MCF 10A (cell line): ENCODE measurements at regions of chr18 and their contacts with region 1.

Region 1: DNA sequence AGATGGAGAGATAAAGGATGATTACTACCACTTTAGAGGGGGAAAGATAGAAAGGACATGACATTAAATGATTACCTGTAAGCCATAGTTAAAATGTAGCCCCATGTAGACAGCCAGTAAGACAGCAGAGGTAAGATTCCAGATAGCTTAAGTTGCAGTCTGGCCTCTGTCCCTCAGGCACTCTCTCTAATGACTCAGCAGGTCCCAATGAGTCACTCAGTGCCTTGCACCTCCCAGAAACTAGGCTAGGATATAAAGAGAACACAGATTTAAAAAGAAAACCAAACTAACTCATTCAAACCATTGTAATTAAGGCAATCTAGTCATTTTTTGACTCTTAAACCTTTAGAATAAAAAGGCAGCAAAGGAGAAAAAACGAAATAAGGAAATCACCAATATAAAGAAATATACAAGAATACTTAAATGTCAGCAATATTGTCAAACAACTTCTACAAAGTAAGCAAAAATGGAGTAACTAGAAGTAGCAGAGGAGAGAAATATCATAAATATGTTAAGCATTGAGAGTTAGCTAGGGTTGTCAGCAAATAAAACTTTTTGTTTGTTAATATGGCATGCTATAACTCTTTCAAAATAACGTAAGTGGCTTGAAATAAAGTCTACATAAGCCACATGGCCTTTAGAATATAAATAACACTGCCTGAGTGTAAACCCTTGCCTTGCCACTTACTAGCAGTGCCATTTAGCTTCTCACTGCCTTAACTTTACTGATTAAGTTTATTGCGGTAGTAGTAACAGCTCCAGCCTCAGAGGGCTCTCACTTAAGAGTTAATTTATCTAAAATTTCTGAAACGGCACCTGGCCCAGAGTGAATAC is 48.5 kb downstream of the SOCS6 start:
- DNase-seq: peak; percentile 95
- H3K4me3 Mint-ChIP-seq: peak overlapping the region; percentile 1
- H3K27ac Mint-ChIP-seq: peak overlapping the region; percentile 90
- H3K4me1 Mint-ChIP-seq: peaks cover 26% of the 10 kb centered on the region
- H3K27me3 Mint-ChIP-seq: no peaks in the 10 kb centered on the region
- CTCF ChIP-seq: no peak

Region 2: DNA sequence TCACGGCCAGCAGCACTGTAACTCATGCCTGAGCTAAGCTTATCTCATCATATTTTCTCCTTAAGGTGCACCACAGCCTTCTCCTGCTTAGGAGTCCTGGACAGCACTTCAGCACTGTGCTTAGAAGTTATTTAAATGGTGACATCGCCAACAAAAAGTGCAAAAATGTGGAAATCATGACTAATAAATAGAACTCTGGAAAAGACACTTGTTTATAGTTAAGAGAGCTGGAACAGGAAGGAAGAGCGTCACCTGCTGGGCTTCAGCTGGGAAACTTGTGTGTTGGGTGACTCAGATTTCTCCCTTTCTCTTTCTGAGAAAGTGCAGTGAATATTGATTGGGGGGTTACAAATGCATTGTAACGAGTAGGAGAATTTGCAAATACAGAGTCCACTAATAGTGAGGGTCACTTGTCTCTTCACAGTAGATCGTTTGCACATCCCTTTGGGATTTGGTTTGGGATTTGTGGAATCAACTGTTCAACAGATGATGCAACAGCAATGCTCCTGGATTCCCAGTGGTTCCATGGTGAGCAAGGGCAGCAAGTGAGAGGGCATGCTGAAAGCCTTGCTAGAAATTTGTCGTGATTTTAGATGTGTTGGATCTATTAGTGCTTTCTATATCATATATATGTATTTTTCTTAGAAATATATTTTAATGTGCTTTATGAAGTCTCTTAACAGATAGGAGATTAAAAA is 852.5 kb before region 1 on chr18:
- CTCF ChIA-PET with region 1: no interaction called
- POLR2A ChIA-PET with region 1: no interaction called
- intact Hi-C with region 1: no loop called
- DNase-seq: peak; percentile 16
- H3K4me3 Mint-ChIP-seq: no peak overlapping the region
- H3K27ac Mint-ChIP-seq: no peak overlapping the region
- H3K4me1 Mint-ChIP-seq: no peaks in the 10 kb centered on the region
- H3K27me3 Mint-ChIP-seq: peaks cover 41% of the 10 kb centered on the region
- CTCF ChIP-seq: no peak

Region 3: DNA sequence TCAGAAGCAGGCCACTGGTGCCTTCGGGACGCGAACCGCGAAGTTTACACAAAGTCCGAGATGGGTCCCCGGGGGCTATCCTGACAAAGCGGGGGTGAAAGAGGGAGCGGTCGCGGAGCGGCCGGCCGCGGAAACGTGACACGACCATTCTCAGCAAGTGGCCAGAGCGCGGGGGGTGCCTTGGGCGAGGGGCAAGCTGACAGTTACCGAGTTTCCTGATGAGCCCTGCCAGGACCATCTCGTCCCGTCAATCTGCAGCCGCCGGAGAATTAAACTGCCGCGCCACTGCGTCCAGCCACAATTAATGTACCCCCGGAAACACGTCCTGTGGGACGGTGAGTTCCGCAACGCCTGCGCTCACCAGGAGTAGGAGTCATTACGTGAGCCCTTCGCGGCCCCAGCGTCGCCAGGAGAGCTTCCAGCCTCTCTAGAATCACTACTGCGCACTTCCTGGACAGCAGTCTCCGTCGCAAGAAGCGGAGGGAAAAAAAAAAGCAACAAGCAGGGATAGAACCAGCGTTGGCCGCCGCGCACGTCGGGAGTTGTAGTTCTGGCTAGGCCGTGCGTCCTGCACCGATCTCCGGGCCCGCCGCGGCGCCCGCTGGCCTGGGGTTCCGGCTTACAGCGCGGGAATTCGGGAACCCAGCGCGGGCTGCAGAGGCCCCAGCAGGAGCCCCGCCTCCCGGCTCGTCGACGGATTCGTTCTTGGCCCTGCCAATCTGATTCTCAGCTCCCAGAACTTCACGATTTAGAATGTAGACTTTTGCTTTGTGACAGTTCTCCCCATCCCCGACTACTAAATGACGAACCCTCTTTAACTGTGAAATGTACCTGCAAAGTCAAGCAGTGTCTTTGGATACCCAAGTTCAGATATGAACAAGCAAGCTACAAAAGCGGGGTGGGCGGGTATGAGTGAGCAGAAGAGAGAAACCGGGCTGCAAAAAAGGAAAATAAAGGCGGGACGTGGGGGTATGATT is 131.6 kb before region 1 on chr18 and contains the start of gene RTTN:
- CTCF ChIA-PET with region 1: no interaction called
- POLR2A ChIA-PET with region 1: interaction called, 4 read pairs
- intact Hi-C with region 1: loop called (anchors 1 kb)
- DNase-seq: peak; percentile 92
- H3K4me3 Mint-ChIP-seq: peak within 1 kb of the TSS; percentile 90
- H3K27ac Mint-ChIP-seq: peak within 1 kb of the TSS; percentile 93
- H3K4me1 Mint-ChIP-seq: peaks cover 16% of the 10 kb centered on the region
- H3K27me3 Mint-ChIP-seq: no peaks in the 10 kb centered on the region
- CTCF ChIP-seq: no peak
- total RNA-seq, gene RTTN: 55.8 and 64.7 TPM in 2 replicates

Region 4: GRCh38 chr18:70288851-70289328 is 48.5 kb before region 1 on chr18 and contains the start of gene SOCS6:
- CTCF ChIA-PET with region 1: no interaction called
- POLR2A ChIA-PET with region 1: interaction called, 8 read pairs
- intact Hi-C with region 1: loop called (anchors 2 kb)
- DNase-seq: peak; percentile 68
- H3K4me3 Mint-ChIP-seq: peak within 1 kb of the TSS; percentile 81
- H3K27ac Mint-ChIP-seq: peak within 1 kb of the TSS; percentile 83
- H3K4me1 Mint-ChIP-seq: peaks cover 24% of the 10 kb centered on the region
- H3K27me3 Mint-ChIP-seq: no peaks in the 10 kb centered on the region
- CTCF ChIP-seq: no peak
- total RNA-seq, gene SOCS6: 16.9 and 20.4 TPM in 2 replicates

Region 5: GRCh38 chr18:70355620-70356385 is 18.4 kb after region 1 on chr18:
- CTCF ChIA-PET with region 1: interaction called, 3 read pairs
- POLR2A ChIA-PET with region 1: interaction called, 14 read pairs
- intact Hi-C with region 1: loop called (anchors 2 kb)
- DNase-seq: no peak
- H3K4me3 Mint-ChIP-seq: no peak overlapping the region
- H3K27ac Mint-ChIP-seq: peak overlapping the region; percentile 63
- H3K4me1 Mint-ChIP-seq: peaks cover 8% of the 10 kb centered on the region
- H3K27me3 Mint-ChIP-seq: no peaks in the 10 kb centered on the region
- CTCF ChIP-seq: no peak

Region 6: GRCh38 chr18:70384181-70384790 is 46.9 kb after region 1 on chr18:
- CTCF ChIA-PET with region 1: no interaction called
- POLR2A ChIA-PET with region 1: no interaction called
- intact Hi-C with region 1: loop called (anchors 1 kb)
- DNase-seq: peak; percentile 90
- H3K4me3 Mint-ChIP-seq: peak overlapping the region; percentile 64
- H3K27ac Mint-ChIP-seq: peak overlapping the region; percentile 89
- H3K4me1 Mint-ChIP-seq: peaks cover 29% of the 10 kb centered on the region
- H3K27me3 Mint-ChIP-seq: no peaks in the 10 kb centered on the region
- CTCF ChIP-seq: no peak